ENCODE measurements at regions of chr6 and their contacts with region 1.

Region 1: GRCh38 chr6:166910601-166911000 is 45.7 kb downstream of the RNASET2 start:
- DNase-seq: peak; percentile 58
- H3K4me3 Mint-ChIP-seq: no peak overlapping the region
- H3K27ac Mint-ChIP-seq: no peak overlapping the region
- H3K4me1 Mint-ChIP-seq: peaks cover 32% of the 10 kb centered on the region
- H3K27me3 Mint-ChIP-seq: no peaks in the 10 kb centered on the region

Region 2: GRCh38 chr6:166942393-166943168 is 32.0 kb after region 1 on chr6:
- CTCF ChIA-PET with region 1: no interaction called
- POLR2A ChIA-PET with region 1: no interaction called
- intact Hi-C with region 1: loop called (anchors 2 kb)
- DNase-seq: peak; percentile 91
- H3K4me3 Mint-ChIP-seq: peak overlapping the region; percentile 49
- H3K27ac Mint-ChIP-seq: peak overlapping the region; percentile 95
- H3K4me1 Mint-ChIP-seq: peaks cover 45% of the 10 kb centered on the region
- H3K27me3 Mint-ChIP-seq: no peaks in the 10 kb centered on the region